ENCODE measurements at regions of chr15 and their contacts with region 1.

Region 1: GRCh38 chr15:40367686-40368611 is 9.9 kb downstream of the DISP2 start:
- DNase-seq: peak; percentile 94

Region 2: DNA sequence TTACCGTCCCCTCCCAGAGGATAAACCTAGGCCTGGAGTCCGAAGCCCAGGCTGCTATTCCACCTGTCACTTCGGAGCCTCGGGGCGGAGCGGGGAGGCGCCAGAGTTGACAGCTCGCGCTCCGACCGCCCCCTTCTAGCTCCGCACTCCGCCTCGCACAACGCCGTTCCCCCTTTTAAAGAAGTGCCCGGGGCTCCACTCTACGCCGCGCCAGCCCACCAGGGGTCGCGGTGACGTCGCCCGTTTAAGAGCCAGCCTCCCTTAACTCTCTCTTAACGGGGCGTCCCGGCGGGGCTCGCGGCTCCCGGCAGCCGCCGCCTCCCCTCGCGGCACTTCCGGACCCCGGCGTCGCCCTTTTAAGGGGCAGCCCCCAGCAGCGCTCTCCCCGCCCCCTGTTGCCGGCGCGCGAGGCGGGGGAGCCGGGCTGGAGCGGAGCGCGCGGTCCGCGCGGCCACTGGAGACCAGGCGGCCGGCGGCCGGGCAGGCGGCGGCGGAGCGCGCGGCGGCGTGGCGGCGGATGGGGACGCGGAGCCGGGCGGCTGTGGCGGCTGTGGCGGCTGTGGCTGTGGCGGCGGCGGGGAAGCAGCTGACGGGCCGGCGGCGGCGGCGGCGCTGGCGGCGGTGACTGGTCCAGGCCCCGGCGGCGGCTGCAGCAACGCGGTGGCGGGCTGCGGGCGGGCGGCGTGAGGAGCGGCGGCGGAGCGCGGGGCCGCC is 44.6 kb before region 1 on chr15 and contains the start of gene INAFM2:
- intact Hi-C with region 1: loop called (anchors 1 kb)
- DNase-seq: peak; percentile 94
- total RNA-seq, gene INAFM2: 40.0 TPM